Activated CD4-positive, alpha-beta T cell treated with anti-CD3 and anti-CD28 coated beads, Interleukin-2, amount 10 ng/mL, durations not matched to agents 24 days and 14 days (primary cell): ENCODE measurements at regions of chr20 and their contacts with region 1.

Region 1: DNA sequence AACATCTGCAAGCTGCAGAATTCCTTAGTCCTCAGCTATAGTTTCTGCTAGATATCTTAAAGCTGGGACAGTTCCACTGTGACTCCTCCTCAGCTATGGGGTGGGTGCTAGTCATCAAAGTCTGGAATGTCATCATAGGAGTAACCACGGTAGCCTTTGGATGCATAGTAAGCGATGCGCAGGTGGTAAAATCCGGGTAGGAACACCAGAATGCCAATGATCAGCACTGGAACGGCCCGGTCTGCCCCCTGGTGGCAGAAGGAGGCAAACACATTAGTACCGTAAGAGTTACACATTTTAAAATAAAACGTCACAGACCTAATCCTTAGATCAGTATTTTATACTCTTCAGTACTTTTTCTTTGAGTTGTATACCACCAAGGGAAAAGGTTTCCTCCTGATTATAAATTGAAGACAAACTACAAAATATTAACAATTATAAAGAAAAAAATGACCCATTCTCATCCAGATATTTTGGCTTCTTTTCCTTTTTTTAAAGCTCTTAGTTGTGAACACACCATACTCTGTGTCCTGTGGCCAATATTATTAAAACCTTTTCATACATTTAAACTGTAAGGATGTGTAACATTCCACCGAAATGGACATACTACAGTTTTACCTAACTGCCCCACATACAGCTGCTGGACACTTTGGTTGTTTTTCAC is 18.9 kb downstream of the PCNA start:
- DNase-seq: peak; percentile 92
- H3K4me3 Mint-ChIP-seq: no peak overlapping the region
- H3K27ac Mint-ChIP-seq: no peak overlapping the region
- H3K4me1 Mint-ChIP-seq: peaks cover 6% of the 10 kb centered on the region
- H3K27me3 Mint-ChIP-seq: no peaks in the 10 kb centered on the region

Region 2: DNA sequence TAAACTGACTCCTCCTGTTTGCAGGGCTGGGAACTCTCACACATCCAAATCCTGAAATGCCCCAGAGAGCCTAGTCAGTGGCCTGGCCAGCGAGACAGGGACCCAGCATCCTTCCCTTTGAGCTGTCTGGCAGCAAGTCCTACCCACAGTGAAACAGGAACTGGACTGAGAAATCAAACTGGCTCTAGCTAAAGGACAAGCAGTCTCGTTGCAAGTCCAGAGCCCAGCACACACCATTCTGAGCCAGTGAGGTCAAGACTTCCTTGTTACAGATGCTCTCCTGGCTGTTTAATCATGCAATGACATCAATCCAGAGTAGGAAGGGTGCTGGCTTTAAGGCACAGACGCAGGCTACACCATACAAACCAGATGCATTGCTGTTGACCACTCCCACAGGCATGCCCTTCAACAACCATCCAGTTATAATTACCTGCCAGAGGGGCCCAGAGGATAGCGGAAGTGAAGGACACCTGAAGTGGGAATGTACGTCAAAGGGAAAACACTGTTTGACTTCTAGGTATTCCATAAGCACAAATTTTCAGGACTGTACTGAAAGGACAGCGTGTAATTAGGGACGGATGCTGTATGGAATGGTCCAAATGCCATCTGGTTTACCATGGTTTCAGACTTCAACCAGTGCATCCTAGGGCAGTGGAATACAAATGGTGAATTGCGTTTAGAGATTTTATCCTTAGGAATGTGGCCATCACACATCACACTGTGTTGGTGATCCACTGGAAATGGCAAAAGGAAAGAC is 213.9 kb before region 1 on chr20:
- intact Hi-C with region 1: no loop called
- DNase-seq: no peak
- H3K4me3 Mint-ChIP-seq: no peak overlapping the region
- H3K27ac Mint-ChIP-seq: no peak overlapping the region
- H3K4me1 Mint-ChIP-seq: no peaks in the 10 kb centered on the region
- H3K27me3 Mint-ChIP-seq: no peaks in the 10 kb centered on the region

Region 3: GRCh38 chr20:4956200-4956810 is 144.5 kb before region 1 on chr20:
- intact Hi-C with region 1: loop called (anchors 2 kb)
- DNase-seq: peak; percentile 77
- H3K4me3 Mint-ChIP-seq: no peak overlapping the region
- H3K27ac Mint-ChIP-seq: no peak overlapping the region
- H3K4me1 Mint-ChIP-seq: peaks cover 4% of the 10 kb centered on the region
- H3K27me3 Mint-ChIP-seq: no peaks in the 10 kb centered on the region

Region 4: DNA sequence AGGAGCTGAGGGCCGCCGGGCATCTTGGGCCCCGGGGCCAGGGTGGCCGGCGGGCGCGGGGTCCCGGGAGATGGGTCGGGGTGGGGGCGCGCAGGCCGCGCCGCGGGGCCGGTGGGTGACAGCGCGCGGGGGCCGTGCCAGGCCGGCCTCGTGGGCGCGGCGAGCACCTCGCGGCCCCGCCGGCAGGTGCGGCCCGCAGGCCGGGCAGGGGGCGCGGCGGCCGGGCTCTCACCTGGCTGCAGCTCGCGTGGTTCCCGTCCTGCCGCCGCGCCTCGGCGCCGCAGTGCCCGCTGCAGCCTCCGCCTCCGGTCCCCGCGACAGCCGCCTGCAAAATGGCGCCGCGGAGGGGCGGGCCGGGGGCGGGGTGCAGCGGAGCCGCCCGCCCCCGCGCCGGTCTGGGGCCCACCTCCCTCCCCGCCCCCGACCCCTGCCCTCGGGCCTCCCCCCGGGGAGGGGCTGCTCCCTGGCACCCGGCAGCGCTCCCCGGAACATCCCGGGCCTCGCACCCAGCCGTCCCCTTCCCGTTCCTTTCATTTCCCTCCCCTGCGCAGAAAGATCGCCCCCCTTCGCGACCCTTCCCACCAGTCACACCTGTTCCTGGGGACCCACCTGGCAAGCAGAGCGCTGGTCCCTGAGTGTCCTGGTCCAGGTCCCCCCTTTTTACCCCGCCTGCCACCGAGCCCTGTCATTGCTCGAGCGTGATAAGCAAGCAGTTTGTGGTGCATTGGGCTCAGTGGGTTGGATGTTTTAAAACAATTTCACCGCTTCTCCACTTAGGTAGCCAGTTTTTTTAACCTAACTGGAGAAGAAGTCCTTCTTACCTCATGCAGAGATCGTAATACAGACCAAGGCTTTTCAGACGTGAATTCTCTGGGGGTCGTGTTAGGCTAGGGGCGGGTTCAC is 99.4 kb before region 1 on chr20 and contains the start of gene SLC23A2:
- intact Hi-C with region 1: loop called (anchors 5 kb)
- DNase-seq: peak; percentile 88
- H3K4me3 Mint-ChIP-seq: peak within 1 kb of the TSS; percentile 98
- H3K27ac Mint-ChIP-seq: peak within 1 kb of the TSS; percentile 96
- H3K4me1 Mint-ChIP-seq: peaks cover 35% of the 10 kb centered on the region
- H3K27me3 Mint-ChIP-seq: peaks cover 19% of the 10 kb centered on the region
- total RNA-seq, gene SLC23A2: 26.9 and 27.6 TPM in 2 replicates